Breast epithelium (tissue), 4 donors: ENCODE measurements at regions of chr20 and their contacts with region 1.

Region 1: DNA sequence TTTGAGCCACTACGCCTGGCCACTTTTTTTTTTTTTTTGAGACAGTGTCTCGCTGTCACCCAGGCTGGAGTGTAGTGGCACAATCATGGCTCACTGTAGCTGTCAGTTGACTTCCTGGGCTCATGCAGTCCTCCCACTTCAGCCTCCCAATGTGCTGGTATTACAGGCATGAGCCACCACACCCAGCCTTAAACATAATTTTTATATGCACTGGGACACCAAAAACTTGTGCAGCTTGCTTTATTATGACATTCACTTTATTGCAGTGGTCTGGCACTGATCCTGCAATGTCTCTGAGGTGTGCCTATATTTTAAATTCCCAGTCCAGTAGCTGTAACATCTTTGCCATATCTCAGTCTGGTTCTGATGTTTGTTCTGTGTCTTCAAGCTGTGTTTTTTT is 34.7 kb downstream of the KAT14 start:
- DNase-seq: no peak
- H3K4me3 ChIP-seq: no peak overlapping the region
- H3K27ac ChIP-seq: no peak overlapping the region
- H3K4me1 ChIP-seq: no peaks in the 10 kb centered on the region
- H3K27me3 ChIP-seq: no peaks in the 10 kb centered on the region
- CTCF ChIP-seq: no peak
- POLR2A ChIP-seq: no peak

Region 2: GRCh38 chr20:19540392-19540791 is 1368.0 kb after region 1 on chr20:
- intact Hi-C with region 1: loop called (anchors 5 kb)
- DNase-seq: no peak
- H3K4me3 ChIP-seq: no peak overlapping the region
- H3K27ac ChIP-seq: no peak overlapping the region
- H3K4me1 ChIP-seq: no peaks in the 10 kb centered on the region
- H3K27me3 ChIP-seq: no peaks in the 10 kb centered on the region
- CTCF ChIP-seq: no peak
- POLR2A ChIP-seq: no peak